ENCODE measurements at regions of chr4 and their contacts with region 1.

Region 1: DNA sequence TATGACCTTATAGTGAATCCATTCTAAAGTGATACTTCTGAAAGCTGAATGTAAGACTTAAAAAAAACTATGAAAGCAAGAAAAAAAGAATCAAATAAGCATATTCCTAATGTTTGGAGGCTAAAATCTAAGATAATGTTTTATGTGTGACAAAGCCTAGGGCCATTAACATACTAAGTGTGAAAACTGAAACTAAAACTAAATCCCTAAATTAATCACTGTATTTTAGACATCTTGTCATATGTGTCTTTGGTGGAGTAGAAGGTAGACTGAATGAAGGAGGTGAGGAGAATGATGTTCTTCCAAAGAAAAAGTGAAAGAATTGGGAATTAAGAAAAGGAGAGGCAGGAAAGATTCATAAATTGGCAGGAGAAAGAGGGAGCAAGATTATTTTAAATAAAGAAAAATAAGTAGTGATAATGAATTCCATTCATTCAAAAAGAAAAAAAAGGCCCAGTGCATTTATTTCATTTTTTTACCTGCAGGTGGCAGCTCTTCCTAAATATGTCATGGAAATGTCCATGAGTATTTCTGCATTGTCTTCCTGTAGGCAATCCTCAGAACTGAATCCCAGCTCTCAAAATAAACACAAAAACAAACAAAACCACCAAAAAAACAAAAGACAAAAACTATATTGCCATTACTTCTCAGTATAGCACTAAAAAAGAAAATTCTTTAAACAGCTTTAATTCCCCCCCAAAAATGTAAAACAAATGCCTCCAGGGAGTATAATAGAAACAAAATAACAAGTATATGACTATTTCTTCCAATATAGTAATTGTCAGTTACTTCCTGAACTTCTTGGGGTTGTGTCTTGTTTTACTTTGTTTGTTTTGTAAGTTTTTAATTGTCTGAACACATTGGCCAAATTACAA is 17.0 kb upstream of the AP1AR start:
- DNase-seq: no peak
- ATAC-seq: no peak
- H3K4me3 Mint-ChIP-seq: no peak overlapping the region
- H3K27ac Mint-ChIP-seq: no peak overlapping the region
- H3K4me1 Mint-ChIP-seq: no peaks in the 10 kb centered on the region
- H3K27me3 Mint-ChIP-seq: no peaks in the 10 kb centered on the region
- CTCF ChIP-seq: peak; percentile 17

Region 2: GRCh38 chr4:111722213-111722720 is 492.4 kb before region 1 on chr4:
- CTCF ChIA-PET with region 1: no interaction called
- POLR2A ChIA-PET with region 1: no interaction called
- intact Hi-C with region 1: no loop called
- DNase-seq: no peak
- ATAC-seq: no peak
- H3K4me3 Mint-ChIP-seq: no peak overlapping the region
- H3K27ac Mint-ChIP-seq: no peak overlapping the region
- H3K4me1 Mint-ChIP-seq: no peaks in the 10 kb centered on the region
- H3K27me3 Mint-ChIP-seq: no peaks in the 10 kb centered on the region
- CTCF ChIP-seq: no peak

Region 3: DNA sequence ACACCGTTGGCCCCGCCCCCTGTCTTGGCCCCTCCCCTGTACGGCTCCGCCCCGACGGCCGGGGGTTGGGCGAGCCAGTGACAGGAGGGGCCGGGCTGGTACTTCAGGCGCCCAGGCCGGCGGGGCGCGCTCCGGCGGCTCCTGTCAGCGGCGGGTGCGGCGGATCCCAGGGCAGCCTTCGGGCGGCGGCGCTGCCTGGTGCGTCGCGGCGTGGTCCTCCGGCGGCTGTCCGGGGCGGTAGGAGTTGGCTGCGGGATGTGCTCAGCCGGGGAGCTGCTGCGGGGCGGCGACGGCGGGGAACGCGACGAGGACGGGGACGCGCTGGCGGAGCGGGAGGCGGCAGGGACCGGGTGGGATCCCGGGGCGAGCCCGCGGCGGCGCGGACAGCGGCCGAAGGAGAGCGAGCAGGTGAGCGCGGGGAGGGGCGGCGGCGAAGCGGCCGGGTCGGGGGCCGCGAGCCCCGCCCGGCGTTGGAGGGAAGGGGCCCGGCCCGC is 69.3 kb before region 1 on chr4 and contains the start of gene FAM241A:
- CTCF ChIA-PET with region 1: no interaction called
- POLR2A ChIA-PET with region 1: no interaction called
- intact Hi-C with region 1: loop called (anchors 5 kb)
- DNase-seq: peak; percentile 86
- ATAC-seq: peak; percentile 97
- H3K4me3 Mint-ChIP-seq: peak within 1 kb of the TSS; percentile 97
- H3K27ac Mint-ChIP-seq: peak within 1 kb of the TSS; percentile 80
- H3K4me1 Mint-ChIP-seq: peaks cover 19% of the 10 kb centered on the region
- H3K27me3 Mint-ChIP-seq: peaks cover 5% of the 10 kb centered on the region
- CTCF ChIP-seq: no peak
- total RNA-seq, gene FAM241A: 1.1 and 1.5 TPM in 2 replicates

Region 4: DNA sequence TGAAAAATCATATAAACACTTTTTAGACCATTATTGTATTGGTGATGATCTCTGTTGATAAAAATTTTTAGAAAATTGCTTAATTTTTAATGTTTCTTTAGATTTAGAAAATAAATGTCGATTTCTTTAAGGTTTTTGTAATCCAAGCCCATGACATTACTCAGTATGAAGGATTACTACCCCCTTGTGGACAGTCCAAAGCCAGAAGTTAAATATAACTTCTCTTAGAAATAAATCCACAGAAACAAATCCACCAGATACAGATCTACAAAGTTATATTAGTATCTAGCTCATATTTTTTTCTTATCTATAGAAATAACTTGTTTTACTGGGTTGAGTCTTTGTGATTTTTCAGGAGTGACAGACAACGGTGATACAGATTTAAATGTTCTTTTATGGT is 52.2 kb after region 1 on chr4:
- CTCF ChIA-PET with region 1: no interaction called
- POLR2A ChIA-PET with region 1: no interaction called
- intact Hi-C with region 1: loop called (anchors 2 kb)
- DNase-seq: no peak
- ATAC-seq: no peak
- H3K4me3 Mint-ChIP-seq: no peak overlapping the region
- H3K27ac Mint-ChIP-seq: no peak overlapping the region
- H3K4me1 Mint-ChIP-seq: peaks cover 2% of the 10 kb centered on the region
- H3K27me3 Mint-ChIP-seq: no peaks in the 10 kb centered on the region
- CTCF ChIP-seq: no peak